OCI-LY7 (cell line): ENCODE measurements at regions of chr6 and their contacts with region 1.

Region 1: GRCh38 chr6:20217324-20217855 is 5.1 kb upstream of the MBOAT1 start:
- DNase-seq: no peak
- H3K4me3 ChIP-seq: no peak overlapping the region
- H3K27ac ChIP-seq: no peak overlapping the region
- H3K4me1 ChIP-seq: no peaks in the 10 kb centered on the region
- CTCF ChIP-seq: no peak

Region 2: GRCh38 chr6:20197251-20197650 is 20.1 kb before region 1 on chr6:
- CTCF ChIA-PET with region 1: no interaction called
- POLR2A ChIA-PET with region 1: interaction called, 11 read pairs
- intact Hi-C with region 1: no loop called
- DNase-seq: no peak
- H3K4me3 ChIP-seq: no peak overlapping the region
- H3K27ac ChIP-seq: no peak overlapping the region
- H3K4me1 ChIP-seq: no peaks in the 10 kb centered on the region
- CTCF ChIP-seq: no peak

Region 3: DNA sequence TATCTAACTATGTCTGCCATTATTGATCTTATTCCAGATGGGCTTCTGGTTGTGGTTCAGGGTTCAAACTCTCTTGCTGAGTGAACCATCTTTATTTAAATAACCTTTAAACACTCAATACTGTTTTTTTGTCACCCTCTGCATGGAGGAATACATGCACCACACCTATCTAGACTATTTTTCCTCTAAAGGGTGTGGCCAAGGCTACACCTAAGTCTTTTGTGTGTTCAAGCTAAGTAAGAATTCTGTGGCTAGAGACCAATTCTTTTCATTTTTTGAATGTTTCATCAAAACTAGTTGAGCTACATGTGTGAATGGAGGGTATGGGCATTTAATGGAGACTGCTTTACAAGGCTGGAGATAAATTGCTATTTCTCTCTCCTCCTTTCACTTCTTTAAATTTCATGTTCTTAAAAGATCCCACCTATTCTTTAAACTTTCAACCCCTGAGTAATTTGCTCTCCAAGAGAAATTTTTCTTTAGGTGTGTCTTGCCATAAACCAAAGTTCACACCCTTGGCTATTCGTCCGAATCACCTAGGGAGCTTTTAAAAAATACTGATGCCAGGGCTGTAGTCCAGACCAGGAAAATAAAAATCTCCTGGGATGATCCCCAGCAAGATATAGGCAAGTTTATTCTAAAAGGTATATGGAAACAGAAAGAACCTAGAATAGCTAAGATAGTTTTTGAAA is 19.7 kb after region 1 on chr6:
- CTCF ChIA-PET with region 1: no interaction called
- POLR2A ChIA-PET with region 1: no interaction called
- intact Hi-C with region 1: no loop called
- DNase-seq: no peak
- H3K4me3 ChIP-seq: no peak overlapping the region
- H3K27ac ChIP-seq: no peak overlapping the region
- H3K4me1 ChIP-seq: no peaks in the 10 kb centered on the region
- CTCF ChIP-seq: no peak